ENCODE measurements at regions of chr3 and their contacts with region 1.

Region 1: GRCh38 chr3:193960487-193961274 is 175.3 kb upstream of the HES1 start:
- DNase-seq: no peak
- H3K4me3 Mint-ChIP-seq: no peak overlapping the region
- H3K27ac Mint-ChIP-seq: no peak overlapping the region
- H3K4me1 Mint-ChIP-seq: peaks cover 26% of the 10 kb centered on the region
- H3K27me3 Mint-ChIP-seq: peaks cover 45% of the 10 kb centered on the region

Region 2: DNA sequence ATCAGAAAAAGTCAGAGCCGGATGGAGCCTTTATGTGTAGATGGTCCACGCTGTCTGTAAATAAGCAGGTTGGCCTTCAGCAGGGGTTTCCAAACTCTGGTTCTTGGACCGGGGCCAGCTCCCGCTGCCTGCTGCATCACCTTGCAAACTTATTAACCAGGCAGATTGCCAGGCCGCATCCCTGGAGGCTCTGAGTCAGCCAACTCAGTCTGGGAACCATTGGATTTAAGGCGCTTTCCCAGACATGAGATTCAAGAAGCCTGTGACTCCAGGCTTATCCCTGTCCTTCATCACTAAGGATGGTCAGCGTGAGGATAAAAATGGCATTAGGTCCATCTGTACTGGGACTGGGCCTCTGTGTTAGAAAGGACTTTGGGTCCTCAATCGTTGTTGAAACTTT is 155.2 kb before region 1 on chr3:
- CTCF ChIA-PET with region 1: no interaction called
- POLR2A ChIA-PET with region 1: no interaction called
- intact Hi-C with region 1: no loop called
- DNase-seq: no peak
- H3K4me3 Mint-ChIP-seq: no peak overlapping the region
- H3K27ac Mint-ChIP-seq: no peak overlapping the region
- H3K4me1 Mint-ChIP-seq: no peaks in the 10 kb centered on the region
- H3K27me3 Mint-ChIP-seq: peaks cover 3% of the 10 kb centered on the region

Region 3: GRCh38 chr3:193842029-193842798 is 118.5 kb before region 1 on chr3:
- CTCF ChIA-PET with region 1: no interaction called
- POLR2A ChIA-PET with region 1: no interaction called
- intact Hi-C with region 1: no loop called
- DNase-seq: no peak
- H3K4me3 Mint-ChIP-seq: no peak overlapping the region
- H3K27ac Mint-ChIP-seq: no peak overlapping the region
- H3K4me1 Mint-ChIP-seq: no peaks in the 10 kb centered on the region
- H3K27me3 Mint-ChIP-seq: peaks cover 27% of the 10 kb centered on the region

Region 4: DNA sequence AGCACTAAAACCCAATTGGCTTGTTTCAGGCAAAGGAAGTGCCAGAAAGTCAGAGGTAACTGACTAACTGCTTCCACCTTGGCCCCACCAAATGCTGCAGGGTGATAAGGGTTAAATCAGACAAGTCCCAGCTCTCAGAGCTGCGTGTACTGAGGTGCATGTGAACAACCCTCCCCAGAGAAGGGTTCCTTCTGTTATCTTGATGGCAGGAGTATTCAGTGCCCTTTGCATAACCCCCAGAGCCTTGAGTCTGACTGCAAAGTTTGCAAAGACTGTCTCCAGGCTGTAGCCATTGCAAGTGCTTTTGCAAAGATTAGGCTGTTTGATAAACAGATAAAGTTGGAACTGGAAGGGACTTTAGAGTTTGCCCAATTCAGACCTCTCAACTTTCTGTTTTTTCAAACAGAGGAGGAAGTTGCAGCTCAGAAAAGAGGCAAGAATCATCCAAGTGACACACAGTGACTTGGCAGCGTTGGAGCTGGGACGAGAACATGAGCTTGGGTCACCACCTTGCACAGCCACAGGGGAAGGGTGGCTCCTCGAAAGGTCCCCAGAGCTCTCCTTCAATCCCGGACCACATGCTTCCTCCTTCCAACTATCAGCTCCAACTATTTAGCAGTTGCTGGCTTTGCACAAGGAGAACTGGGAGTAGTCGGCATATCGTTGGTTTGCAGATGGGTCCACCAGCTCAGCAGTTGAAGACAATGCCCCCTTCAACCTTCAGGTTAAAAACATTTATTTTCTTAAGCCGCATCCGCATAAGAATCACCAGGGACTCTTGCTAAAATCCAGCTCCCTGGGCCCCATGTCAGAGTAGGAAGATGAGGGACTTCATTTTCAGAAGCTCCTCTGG is 49.6 kb before region 1 on chr3:
- CTCF ChIA-PET with region 1: no interaction called
- POLR2A ChIA-PET with region 1: no interaction called
- intact Hi-C with region 1: loop called (anchors 2 kb)
- DNase-seq: peak; percentile 29
- H3K4me3 Mint-ChIP-seq: no peak overlapping the region
- H3K27ac Mint-ChIP-seq: no peak overlapping the region
- H3K4me1 Mint-ChIP-seq: peaks cover 21% of the 10 kb centered on the region
- H3K27me3 Mint-ChIP-seq: no peaks in the 10 kb centered on the region

Region 5: GRCh38 chr3:194070634-194071409 is 110.1 kb after region 1 on chr3:
- CTCF ChIA-PET with region 1: no interaction called
- POLR2A ChIA-PET with region 1: no interaction called
- intact Hi-C with region 1: loop called (anchors 2 kb)
- DNase-seq: peak; percentile 88
- H3K4me3 Mint-ChIP-seq: peak overlapping the region; percentile 52
- H3K27ac Mint-ChIP-seq: no peak overlapping the region
- H3K4me1 Mint-ChIP-seq: peaks cover 21% of the 10 kb centered on the region
- H3K27me3 Mint-ChIP-seq: peaks cover 44% of the 10 kb centered on the region

Region 6: GRCh38 chr3:194323785-194324735 is 363.4 kb after region 1 on chr3:
- CTCF ChIA-PET with region 1: no interaction called
- POLR2A ChIA-PET with region 1: no interaction called
- intact Hi-C with region 1: loop called (anchors 5 kb)
- DNase-seq: peak; percentile 54
- H3K4me3 Mint-ChIP-seq: no peak overlapping the region
- H3K27ac Mint-ChIP-seq: no peak overlapping the region
- H3K4me1 Mint-ChIP-seq: peaks cover 8% of the 10 kb centered on the region
- H3K27me3 Mint-ChIP-seq: peaks cover 4% of the 10 kb centered on the region